GM13977 (cell line): ENCODE measurements at regions of chr2 and their contacts with region 1.

Region 1: DNA sequence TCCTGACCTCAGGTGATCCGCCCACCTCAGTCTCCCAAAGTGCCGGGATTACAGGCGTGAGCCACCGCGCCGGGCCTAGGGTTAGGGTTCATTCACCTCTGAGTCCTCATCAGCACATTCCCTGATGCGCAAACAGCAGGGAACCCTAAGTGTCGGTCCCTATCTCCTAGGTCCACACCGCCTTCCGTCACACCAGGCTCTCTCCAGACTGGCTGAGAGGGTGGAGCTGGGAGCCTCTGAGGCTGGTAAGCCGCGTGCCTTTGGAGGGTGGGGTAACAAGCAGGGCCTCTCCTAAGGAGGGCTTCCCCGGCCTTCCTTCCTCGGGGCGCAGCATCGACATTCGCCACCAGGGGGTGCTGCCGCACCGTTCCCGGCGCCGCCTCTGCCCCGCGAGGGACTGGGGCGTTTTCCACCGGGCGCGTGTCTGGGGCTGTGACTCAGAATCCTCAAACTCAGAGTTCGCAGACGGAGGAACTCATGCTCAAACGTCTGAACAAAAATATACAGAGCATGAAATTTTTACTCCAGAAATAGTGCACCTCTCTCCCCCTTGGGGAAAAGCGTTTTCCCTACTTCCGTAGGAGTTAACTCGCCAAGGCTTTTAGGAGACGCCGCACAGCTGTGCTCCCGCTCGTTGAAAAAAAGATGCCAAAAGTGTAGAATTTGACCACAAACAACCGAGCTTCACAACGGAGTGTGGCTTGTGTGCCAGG is 63.9 kb upstream of the ASAP2 start:
- DNase-seq: peak; percentile 88
- CTCF ChIP-seq: peak; percentile 98

Region 2: DNA sequence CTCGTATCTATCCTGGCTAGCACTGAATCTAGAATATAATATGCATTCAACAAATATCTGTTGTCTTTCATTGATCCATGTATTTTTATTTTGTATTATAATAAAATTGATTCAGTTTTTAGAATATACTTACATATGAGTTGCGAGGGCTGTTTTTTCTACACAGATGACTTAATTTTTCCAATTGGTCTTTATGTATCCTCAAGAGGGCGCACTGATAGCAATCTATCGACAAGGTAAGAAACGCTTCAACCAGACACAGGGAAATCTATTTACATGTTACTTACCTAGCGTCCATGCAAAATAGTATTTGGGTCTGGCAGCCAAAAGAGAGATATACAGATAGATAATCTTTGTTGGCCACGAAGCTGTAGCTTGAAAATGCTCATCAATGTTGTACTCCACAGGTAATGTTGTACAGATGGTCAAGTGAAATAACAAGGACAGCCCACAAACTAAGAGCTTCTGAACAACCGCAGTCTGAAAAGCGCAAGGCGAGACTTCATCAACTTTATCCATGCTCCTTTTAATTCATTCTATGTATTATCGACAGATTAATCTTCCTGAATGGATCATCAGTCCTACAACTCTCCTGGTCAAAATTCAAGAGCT is 269.8 kb before region 1 on chr2:
- in situ Hi-C with region 1: loop called (anchors 25 kb)
- DNase-seq: peak; percentile 52
- CTCF ChIP-seq: peak; percentile 63

Region 3: GRCh38 chr2:8926356-8926755 is 216.4 kb before region 1 on chr2:
- in situ Hi-C with region 1: no loop called
- DNase-seq: no peak
- CTCF ChIP-seq: no peak

Region 4: GRCh38 chr2:9373077-9373875 is 230.6 kb after region 1 on chr2:
- in situ Hi-C with region 1: no loop called
- DNase-seq: no peak
- CTCF ChIP-seq: no peak